MCF 10A (cell line): ENCODE measurements at regions of chr1 and their contacts with region 1.

Region 1: DNA sequence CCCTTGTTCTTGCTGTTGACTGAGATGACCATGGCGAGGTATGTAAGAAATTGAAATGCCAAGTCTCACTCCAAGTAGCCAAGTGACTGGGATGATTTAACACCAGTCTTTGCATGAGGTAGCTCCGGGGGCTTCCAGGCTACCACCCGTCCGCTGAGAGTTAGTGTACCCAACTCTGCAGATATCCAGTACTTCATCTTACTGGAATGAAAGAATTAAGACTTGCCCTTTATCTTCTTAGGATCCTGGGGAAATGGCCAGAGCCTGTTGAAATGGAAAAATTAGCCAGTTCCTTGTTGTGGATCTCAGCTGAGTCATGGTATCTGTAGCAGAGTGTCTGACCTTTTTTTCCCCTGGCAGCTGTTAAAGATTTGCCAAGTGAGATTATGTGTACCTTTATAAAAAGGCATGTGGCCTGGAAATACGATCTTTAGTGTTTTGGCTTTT is 151.0 kb downstream of the MAST2 start:
- DNase-seq: peak; percentile 70
- H3K4me3 Mint-ChIP-seq: no peak overlapping the region
- H3K27ac Mint-ChIP-seq: peak overlapping the region; percentile 16
- H3K4me1 Mint-ChIP-seq: peaks cover 50% of the 10 kb centered on the region
- H3K27me3 Mint-ChIP-seq: no peaks in the 10 kb centered on the region
- CTCF ChIP-seq: no peak

Region 2: GRCh38 chr1:45458894-45459293 is 495.5 kb before region 1 on chr1:
- CTCF ChIA-PET with region 1: no interaction called
- POLR2A ChIA-PET with region 1: no interaction called
- intact Hi-C with region 1: no loop called
- DNase-seq: no peak
- H3K4me3 Mint-ChIP-seq: no peak overlapping the region
- H3K27ac Mint-ChIP-seq: no peak overlapping the region
- H3K4me1 Mint-ChIP-seq: no peaks in the 10 kb centered on the region
- H3K27me3 Mint-ChIP-seq: no peaks in the 10 kb centered on the region
- CTCF ChIP-seq: no peak

Region 3: DNA sequence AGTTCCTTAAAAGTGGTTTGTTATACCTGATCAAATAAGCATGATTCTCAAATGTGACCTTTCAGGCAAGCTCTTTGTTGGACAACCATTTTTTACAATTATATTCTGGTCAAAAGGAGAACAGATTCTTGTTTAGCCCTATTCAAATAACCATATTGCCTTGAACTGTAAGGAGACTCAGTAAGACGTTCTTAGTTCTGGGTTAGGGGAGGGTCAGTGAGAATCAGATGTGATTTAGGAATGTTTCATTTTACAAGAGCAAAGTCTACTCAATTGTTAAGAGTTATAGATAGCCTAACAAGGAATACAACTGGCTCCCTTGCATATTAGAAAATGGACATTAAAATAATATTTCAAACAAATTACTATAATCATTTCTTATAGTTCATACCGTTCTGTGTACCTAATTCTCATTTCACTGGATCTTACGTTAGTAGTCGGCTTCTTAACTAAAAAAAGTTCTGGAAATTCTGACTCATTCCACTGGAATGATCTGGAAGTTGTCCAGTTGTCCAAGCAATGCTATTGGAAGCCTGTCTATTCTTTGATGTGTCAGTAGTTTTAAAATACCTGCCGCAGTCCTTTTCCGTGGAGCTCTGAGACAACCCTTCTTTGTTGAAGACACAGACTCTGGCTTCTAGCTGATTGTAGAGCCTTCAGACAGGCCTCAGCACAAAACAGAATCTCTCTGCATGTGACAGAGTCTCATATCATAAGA is 62.2 kb before region 1 on chr1:
- CTCF ChIA-PET with region 1: no interaction called
- POLR2A ChIA-PET with region 1: interaction called, 13 read pairs
- intact Hi-C with region 1: no loop called
- DNase-seq: peak; percentile 91
- H3K4me3 Mint-ChIP-seq: peak overlapping the region; percentile 55
- H3K27ac Mint-ChIP-seq: peak overlapping the region; percentile 89
- H3K4me1 Mint-ChIP-seq: peaks cover 26% of the 10 kb centered on the region
- H3K27me3 Mint-ChIP-seq: no peaks in the 10 kb centered on the region
- CTCF ChIP-seq: no peak

Region 4: GRCh38 chr1:45979074-45979777 is 24.8 kb after region 1 on chr1:
- CTCF ChIA-PET with region 1: no interaction called
- POLR2A ChIA-PET with region 1: interaction called, 15 read pairs
- intact Hi-C with region 1: no loop called
- DNase-seq: peak; percentile 34
- H3K4me3 Mint-ChIP-seq: no peak overlapping the region
- H3K27ac Mint-ChIP-seq: peak overlapping the region; percentile 86
- H3K4me1 Mint-ChIP-seq: peaks cover 9% of the 10 kb centered on the region
- H3K27me3 Mint-ChIP-seq: no peaks in the 10 kb centered on the region
- CTCF ChIP-seq: no peak

Region 5: DNA sequence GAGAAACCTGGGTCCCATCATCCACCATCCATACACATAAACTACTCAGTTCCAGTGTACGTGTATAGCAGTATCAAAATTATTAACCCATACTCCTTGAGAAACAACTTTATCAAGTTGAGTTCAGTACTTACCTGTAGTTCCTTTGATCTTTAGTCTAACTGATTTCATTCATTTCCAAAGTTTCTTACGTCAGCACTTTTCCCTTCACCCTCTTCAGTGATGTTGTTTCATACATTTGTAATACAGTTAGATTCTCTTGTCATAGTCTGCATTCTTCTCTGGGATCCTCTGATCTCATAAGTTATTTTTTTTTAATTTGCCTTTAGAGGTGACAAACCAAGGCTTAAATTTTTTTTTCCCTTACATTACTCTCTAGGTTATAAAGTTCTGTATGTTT is 34.8 kb after region 1 on chr1:
- CTCF ChIA-PET with region 1: no interaction called
- POLR2A ChIA-PET with region 1: no interaction called
- intact Hi-C with region 1: no loop called
- DNase-seq: no peak
- H3K4me3 Mint-ChIP-seq: no peak overlapping the region
- H3K27ac Mint-ChIP-seq: no peak overlapping the region
- H3K4me1 Mint-ChIP-seq: no peaks in the 10 kb centered on the region
- H3K27me3 Mint-ChIP-seq: no peaks in the 10 kb centered on the region
- CTCF ChIP-seq: no peak

Region 6: DNA sequence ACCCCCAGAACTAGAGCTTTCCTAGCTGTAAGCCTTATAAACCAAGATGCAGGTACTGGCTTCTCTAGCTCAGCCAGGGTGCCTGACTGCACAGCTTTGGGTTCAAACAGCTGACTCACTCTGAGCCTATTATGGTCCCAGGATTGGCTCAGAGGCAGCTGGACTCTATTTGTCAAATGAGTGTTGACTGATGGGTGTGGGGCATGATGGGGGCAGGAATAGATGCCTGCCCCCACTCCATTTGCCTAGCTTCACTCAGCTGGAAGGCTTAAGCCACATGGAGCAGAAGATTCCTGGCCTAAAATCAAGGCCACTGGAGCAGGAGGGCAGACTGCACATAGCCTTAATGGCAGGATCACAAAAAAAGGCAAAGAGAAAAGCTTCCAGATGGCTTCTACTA is 87.5 kb after region 1 on chr1:
- CTCF ChIA-PET with region 1: no interaction called
- POLR2A ChIA-PET with region 1: no interaction called
- intact Hi-C with region 1: no loop called
- DNase-seq: no peak
- H3K4me3 Mint-ChIP-seq: no peak overlapping the region
- H3K27ac Mint-ChIP-seq: no peak overlapping the region
- H3K4me1 Mint-ChIP-seq: no peaks in the 10 kb centered on the region
- H3K27me3 Mint-ChIP-seq: no peaks in the 10 kb centered on the region
- CTCF ChIP-seq: no peak